Astrocyte of the cerebellum (primary cell): ENCODE measurements at regions of chr3 and their contacts with region 1.

Region 1: DNA sequence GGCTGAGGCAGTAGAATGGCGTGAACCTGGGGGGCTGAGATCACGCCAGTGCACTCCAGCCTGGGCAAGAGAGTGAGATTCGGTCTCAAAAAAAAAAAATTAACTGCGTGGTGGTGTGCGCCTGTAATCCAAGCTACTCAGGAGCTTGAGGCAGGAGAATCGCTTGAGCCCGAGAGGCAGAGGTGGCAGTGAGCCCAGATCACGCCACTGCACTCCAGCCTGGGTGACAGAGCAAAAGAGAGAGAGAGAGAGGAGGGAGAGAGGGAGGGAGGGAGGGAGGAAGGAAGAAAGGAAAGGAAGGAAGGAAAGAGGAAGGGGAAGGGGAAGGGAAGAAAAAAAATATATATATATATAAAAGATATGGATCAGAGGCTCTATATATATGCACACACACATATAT is 6.0 kb downstream of the TM4SF19 start:
- DNase-seq: no peak
- H3K4me3 ChIP-seq: no peak overlapping the region
- CTCF ChIP-seq: no peak

Region 2: DNA sequence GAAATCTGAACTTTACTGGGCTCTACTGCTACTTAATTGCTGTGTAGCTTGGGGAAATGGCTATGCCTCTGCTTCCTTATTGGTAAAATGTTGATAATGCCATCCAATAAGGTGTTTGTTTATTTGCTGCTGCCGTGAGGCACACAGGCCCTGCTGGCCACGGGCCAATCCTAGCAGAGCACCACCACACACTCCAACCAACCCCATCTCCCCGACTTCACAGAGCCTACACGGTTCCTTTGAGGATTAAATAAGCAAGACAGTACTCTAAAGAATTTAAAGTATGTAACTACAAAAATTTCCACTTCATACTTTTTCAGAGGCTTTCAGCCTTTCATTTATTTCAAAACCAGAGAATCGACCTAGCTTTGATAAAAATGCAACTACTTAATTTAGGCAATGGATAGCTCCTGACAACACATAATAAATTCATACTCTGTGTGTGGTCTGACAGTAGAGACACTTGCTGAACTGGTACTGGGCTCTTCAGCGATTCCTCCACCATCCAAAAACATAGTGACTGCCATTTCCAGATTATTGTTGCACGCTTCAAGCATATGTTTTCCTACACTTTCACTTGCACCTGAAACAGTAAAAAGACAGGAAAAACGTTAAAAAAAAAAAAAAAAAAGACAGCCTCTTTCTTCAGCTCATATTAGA is 74.8 kb after region 1 on chr3:
- in situ Hi-C with region 1: loop called (anchors 5 kb)
- DNase-seq: no peak
- H3K4me3 ChIP-seq: no peak overlapping the region
- CTCF ChIP-seq: no peak